Activated naive CD8-positive, alpha-beta T cell treated with anti-CD3 and anti-CD28 coated beads, Interleukin-2, amount 10 ng/mL, durations not matched to agents 7 days and 5 days (primary cell): ENCODE measurements at regions of chr15 and their contacts with region 1.

Region 1: GRCh38 chr15:65286704-65287519 is at the start of gene PARP16:
- DNase-seq: peak; percentile 94
- ATAC-seq: peak; percentile 95
- H3K4me3 Mint-ChIP-seq: peak within 1 kb of the TSS; percentile 75
- H3K27ac Mint-ChIP-seq: peak within 1 kb of the TSS; percentile 83
- H3K4me1 Mint-ChIP-seq: peaks cover 31% of the 10 kb centered on the region
- H3K27me3 Mint-ChIP-seq: no peaks in the 10 kb centered on the region
- total RNA-seq, gene PARP16: 17.7 to 20.4 TPM

Region 2: GRCh38 chr15:65086017-65086679 is 200.8 kb before region 1 on chr15:
- POLR2A ChIA-PET with region 1: no interaction called
- DNase-seq: no peak
- ATAC-seq: no peak
- H3K4me3 Mint-ChIP-seq: no peak overlapping the region
- H3K27ac Mint-ChIP-seq: no peak overlapping the region
- H3K4me1 Mint-ChIP-seq: peaks cover 27% of the 10 kb centered on the region
- H3K27me3 Mint-ChIP-seq: peaks cover 26% of the 10 kb centered on the region

Region 3: DNA sequence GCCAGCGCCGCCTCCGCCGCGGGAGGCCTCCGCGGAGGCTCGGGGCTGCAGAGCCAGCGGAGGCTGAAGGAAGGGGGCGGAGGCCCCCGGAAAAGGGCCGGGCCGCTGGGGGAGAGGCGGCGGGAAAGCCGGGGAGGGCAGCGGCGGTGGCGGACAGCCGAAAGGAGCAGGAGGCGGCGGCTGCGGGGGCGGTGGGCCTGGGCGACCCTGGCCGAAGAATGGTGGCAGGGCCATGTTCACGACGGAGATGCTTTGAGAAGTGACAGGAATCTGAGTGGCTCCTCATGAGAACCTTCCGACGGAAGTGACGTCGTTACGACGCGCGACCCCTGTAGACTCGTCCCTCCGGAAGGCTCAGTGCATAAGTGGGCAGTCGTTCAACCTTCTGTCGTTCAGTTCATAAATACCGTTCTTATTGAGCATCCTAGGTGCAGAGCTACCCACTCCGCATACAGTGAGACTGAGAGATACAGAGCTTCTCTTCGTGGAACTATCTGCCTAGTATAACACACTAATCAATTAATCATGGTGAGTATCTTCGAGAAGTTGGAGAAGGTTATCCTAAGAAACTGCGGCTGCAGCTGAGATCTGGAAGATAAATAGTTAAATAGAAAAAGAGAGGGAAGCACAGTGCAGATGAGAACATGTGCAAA is 153.2 kb before region 1 on chr15 and contains the start of gene PDCD7:
- POLR2A ChIA-PET with region 1: interaction called, 12 read pairs
- DNase-seq: peak; percentile 82
- ATAC-seq: peak; percentile 95
- H3K4me3 Mint-ChIP-seq: peak within 1 kb of the TSS; percentile 87
- H3K27ac Mint-ChIP-seq: peak within 1 kb of the TSS; percentile 90
- H3K4me1 Mint-ChIP-seq: peaks cover 23% of the 10 kb centered on the region
- H3K27me3 Mint-ChIP-seq: peaks cover 2% of the 10 kb centered on the region
- total RNA-seq, gene PDCD7: 39.4 to 42.2 TPM

Region 4: DNA sequence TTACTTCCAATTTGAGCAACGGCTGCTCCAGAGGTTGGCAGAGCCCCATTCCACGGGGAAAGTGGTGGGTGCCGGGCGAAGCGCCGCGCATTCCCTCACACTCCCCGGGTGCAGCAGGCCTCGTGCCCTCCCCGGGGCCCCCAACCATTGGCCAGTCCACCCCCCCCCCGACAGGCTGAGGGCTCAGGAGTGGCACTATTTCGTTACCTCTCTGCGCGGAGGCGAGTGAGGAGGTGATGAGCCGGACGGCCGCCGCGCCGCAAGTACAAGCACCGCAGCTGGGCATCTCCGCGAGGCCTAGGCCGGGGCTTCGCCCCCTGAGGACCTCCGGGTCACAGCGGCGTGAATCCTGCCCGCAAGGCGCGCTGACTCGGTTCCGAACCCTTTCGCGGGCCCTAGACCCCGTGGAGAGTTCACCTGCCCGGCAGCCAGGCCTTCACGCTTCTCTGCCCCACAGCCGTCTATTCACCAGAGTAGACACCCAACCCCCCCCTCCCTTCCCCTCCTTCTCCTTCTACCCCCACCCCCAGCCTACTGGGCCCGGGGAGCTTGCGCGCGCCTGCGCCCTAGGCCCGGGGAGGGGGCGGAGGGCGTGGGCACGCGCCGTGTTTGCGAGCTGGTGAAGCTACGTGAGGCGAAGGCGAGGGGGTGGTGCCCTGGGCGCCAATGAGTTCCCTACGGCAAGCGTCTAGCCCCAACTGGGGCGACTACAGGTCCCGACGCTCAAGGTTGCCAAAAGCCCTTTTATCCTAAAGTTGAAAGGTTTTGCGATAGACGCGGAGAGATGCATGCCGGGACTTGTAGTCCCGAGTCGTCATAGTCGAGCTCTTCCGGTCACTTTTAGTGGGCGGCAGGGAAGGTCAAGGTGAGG is 101.8 kb before region 1 on chr15 and contains the start of gene CLPX:
- POLR2A ChIA-PET with region 1: interaction called, 35 read pairs
- DNase-seq: peak; percentile 88
- ATAC-seq: peak; percentile 97
- H3K4me3 Mint-ChIP-seq: peak within 1 kb of the TSS; percentile 99
- H3K27ac Mint-ChIP-seq: peak within 1 kb of the TSS; percentile 92
- H3K4me1 Mint-ChIP-seq: peaks cover 21% of the 10 kb centered on the region
- H3K27me3 Mint-ChIP-seq: no peaks in the 10 kb centered on the region
- total RNA-seq, gene CLPX: 45.8 to 47.4 TPM

Region 5: DNA sequence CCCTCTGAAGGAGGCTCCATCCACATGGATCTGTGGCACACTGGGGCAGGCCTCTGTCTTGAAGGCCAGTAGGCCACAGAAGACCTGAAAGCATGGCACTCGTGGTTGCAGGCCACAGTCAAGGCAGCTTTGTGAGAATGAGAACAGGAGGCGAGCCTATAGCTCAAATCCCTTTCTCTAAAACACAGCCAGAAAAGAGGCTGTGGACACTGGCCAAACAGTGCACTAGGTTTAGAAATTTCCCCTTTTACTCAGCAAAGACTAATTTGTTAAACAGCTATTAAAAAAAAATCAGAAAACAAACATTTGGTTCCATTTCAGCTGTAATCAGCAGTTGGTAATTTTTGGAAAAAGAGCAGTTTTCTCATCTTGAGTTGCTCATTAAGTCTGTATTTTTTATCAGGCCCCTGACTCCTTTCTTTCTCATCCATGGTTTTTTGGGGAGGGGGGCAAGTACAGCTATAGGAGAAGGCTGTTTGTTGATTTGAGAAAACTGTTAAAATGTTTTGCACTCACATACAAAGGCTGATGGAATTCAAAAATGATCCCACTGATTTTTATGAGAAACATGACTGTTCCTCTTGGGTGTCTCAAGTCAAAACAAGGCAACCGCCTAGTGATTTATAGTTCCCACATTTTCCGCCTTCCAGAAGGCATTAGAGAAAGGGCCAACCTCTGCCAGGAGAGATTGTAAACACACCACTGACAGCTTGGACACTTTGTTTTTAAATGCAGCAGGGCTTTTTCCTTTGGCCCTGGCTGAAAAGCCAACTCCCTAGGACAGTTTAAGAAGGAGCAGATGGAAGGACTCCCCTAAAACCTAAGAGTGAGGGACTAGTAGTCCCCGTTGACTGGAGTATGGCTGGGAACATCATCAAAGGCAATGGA is 28.3 kb before region 1 on chr15:
- POLR2A ChIA-PET with region 1: no interaction called
- DNase-seq: no peak
- ATAC-seq: no peak
- H3K4me3 Mint-ChIP-seq: no peak overlapping the region
- H3K27ac Mint-ChIP-seq: no peak overlapping the region
- H3K4me1 Mint-ChIP-seq: peaks cover 2% of the 10 kb centered on the region
- H3K27me3 Mint-ChIP-seq: no peaks in the 10 kb centered on the region

Region 6: DNA sequence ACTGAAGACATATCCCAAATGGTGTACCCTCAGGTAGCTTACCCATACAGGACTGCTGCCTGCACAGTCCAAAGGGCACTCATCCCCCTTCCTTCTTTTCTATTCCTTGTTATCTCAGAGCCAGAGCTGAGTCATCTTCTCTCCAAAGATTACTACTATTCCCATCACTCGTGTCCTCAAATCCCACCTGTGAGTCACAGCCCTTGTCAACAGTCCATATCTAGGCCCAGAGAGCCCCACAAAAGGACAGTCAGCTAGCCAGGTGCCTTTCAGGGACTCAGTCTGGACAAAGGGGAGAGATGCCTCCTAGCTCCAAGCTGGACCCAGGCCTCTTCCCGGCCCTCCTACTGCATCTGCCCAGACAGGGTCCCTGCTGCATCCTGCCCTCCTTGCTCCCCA is 11.2 kb before region 1 on chr15:
- POLR2A ChIA-PET with region 1: interaction called, 39 read pairs
- DNase-seq: no peak
- ATAC-seq: peak; percentile 12
- H3K4me3 Mint-ChIP-seq: no peak overlapping the region
- H3K27ac Mint-ChIP-seq: no peak overlapping the region
- H3K4me1 Mint-ChIP-seq: peaks cover 25% of the 10 kb centered on the region
- H3K27me3 Mint-ChIP-seq: no peaks in the 10 kb centered on the region

Region 7: DNA sequence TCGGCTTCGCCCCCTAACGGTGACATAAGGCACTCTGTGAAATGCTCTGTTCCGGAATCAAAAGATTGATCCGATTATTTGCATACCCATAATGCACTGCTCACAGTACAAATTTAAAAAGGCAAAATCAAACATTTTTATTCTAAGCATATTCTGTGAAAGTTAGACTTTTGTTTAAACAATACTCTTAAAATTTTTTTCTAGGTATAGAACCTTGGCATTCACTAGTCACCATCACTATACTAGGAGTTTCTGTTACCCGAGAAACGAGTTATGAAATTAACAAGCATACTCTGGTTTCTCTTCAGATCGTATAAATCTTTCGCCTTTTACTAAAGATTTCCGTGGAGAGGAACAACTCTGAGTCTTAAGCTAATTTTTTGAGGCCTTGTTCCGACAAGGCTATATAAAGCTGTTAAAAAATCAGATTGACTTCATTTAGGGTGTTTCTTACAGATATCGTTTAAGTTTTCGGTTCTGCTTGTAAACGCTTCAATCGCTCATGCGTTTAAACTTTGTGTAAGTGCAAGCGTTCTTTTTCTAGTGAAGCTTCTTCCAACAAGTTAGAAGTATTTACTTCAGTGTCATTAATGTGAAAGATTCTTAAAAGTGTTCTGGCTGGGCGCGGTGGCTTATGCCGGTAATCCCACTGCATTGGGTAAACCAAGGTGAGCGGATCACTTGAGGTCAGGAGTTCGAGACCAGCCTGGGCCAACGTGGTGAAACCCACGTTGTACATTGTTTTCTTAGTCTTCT is 17.7 kb after region 1 on chr15 and contains the start of gene RNU5B-1:
- POLR2A ChIA-PET with region 1: interaction called, 112 read pairs
- DNase-seq: peak; percentile 76
- ATAC-seq: peak; percentile 75
- H3K4me3 Mint-ChIP-seq: peak within 1 kb of the TSS; percentile 90
- H3K27ac Mint-ChIP-seq: peak within 1 kb of the TSS; percentile 94
- H3K4me1 Mint-ChIP-seq: peaks cover 20% of the 10 kb centered on the region
- H3K27me3 Mint-ChIP-seq: peaks cover 1% of the 10 kb centered on the region
- total RNA-seq, gene RNU5B-1: 27.2 to 27.3 TPM